Tibial artery (tissue), 4 donors: ENCODE measurements at regions of chr10 and their contacts with region 1.

Region 1: GRCh38 chr10:95350219-95350829 is 59.5 kb upstream of the PDLIM1 start:
- DNase-seq: no peak
- H3K4me3 ChIP-seq: no peak overlapping the region
- H3K27ac ChIP-seq: peak overlapping the region; percentile 57 to 59
- H3K4me1 ChIP-seq: peaks cover 0 to 50% (median 26%) of the 10 kb centered on the region in 4 donors
- H3K27me3 ChIP-seq: no peaks in the 10 kb centered on the region
- CTCF ChIP-seq: peak in 1 of 2 experiments; percentile 10

Region 2: GRCh38 chr10:95246579-95247051 is 103.7 kb before region 1 on chr10:
- intact Hi-C with region 1: loop called (anchors 5 kb)
- DNase-seq: peak; percentile 74 to 80
- H3K4me3 ChIP-seq: no peak overlapping the region
- H3K27ac ChIP-seq: peak overlapping the region; percentile 58 to 70
- H3K4me1 ChIP-seq: peaks cover 0 to 55% (median 41%) of the 10 kb centered on the region in 4 donors
- H3K27me3 ChIP-seq: no peaks in the 10 kb centered on the region
- CTCF ChIP-seq: peak; percentile 78 to 79

Region 3: GRCh38 chr10:95850791-95851190 is 500.5 kb after region 1 on chr10:
- intact Hi-C with region 1: loop called (anchors 10 kb)
- DNase-seq: no peak
- H3K4me3 ChIP-seq: no peak overlapping the region
- H3K27ac ChIP-seq: no peak overlapping the region
- H3K4me1 ChIP-seq: no peaks in the 10 kb centered on the region
- H3K27me3 ChIP-seq: no peaks in the 10 kb centered on the region
- CTCF ChIP-seq: no peak